ENCODE measurements at regions of chr2 and their contacts with region 1.

Region 1: DNA sequence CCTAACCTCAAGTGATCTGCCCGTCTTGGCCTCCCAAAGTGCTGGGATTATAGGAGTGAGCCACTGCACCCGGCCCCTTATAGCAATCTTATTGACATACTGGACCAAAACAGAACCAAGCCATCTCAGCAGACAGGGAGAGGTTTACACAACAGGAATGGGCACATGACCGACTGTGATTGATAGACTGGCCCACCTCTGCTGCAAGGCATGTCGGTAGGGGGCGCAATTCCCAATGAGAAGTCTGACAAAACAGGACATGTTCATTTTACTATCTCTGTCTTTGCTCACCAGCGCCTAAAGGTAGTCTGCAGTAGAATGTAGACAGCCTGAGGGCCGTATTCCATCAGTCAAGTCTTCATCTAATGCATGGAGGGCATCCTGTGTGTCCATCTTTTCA is 2.0 kb downstream of the LYPD6B start:
- DNase-seq: peak in 1 of 2 experiments; percentile 57
- H3K4me3 ChIP-seq: no peak overlapping the region
- H3K4me3 Mint-ChIP-seq: peak overlapping the region; percentile 86
- H3K27ac Mint-ChIP-seq: no peak overlapping the region
- H3K4me1 ChIP-seq: 0 out of 2 replicates have a peak, but pooled peaks cover 5% of the 10 kb centered on the region
- H3K4me1 Mint-ChIP-seq: peaks cover 16% of the 10 kb centered on the region
- H3K27me3 ChIP-seq: no peaks in the 10 kb centered on the region
- H3K27me3 Mint-ChIP-seq: no peaks in the 10 kb centered on the region
- CTCF ChIP-seq: peak; percentile 4 to 34

Region 2: DNA sequence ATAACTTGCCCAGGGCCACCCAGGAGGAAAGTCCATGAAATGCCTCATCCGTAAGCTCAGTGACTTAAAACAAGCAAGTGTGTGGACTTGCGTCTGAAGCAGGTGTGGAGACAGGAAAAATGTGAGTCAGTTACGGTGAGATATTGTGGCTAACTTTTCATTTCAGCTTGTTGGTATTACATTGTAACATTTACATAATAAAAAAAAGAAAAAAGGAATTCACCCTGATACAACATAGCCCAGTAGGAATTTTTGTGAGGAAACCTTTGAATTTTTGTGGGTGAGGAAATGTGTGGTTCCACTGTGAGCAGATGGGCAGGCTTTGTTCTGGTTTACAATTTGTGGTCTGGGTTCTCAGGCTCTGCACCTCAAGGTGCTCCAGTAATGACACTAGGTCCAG is 35.6 kb before region 1 on chr2:
- CTCF ChIA-PET with region 1: no interaction called
- POLR2A ChIA-PET with region 1: no interaction called
- intact Hi-C with region 1: no loop called
- DNase-seq: no peak
- H3K4me3 ChIP-seq: no peak overlapping the region
- H3K4me3 Mint-ChIP-seq: no peak overlapping the region
- H3K27ac Mint-ChIP-seq: no peak overlapping the region
- H3K4me1 ChIP-seq: peaks cover 5% of the 10 kb centered on the region; the same call in 1 of the 2 replicates
- H3K4me1 Mint-ChIP-seq: no peaks in the 10 kb centered on the region
- H3K27me3 ChIP-seq: no peaks in the 10 kb centered on the region
- H3K27me3 Mint-ChIP-seq: no peaks in the 10 kb centered on the region
- CTCF ChIP-seq: no peak

Region 3: GRCh38 chr2:149027590-149028218 is 12.7 kb before region 1 on chr2:
- CTCF ChIA-PET with region 1: interaction called, 5 read pairs
- POLR2A ChIA-PET with region 1: interaction called, 3 read pairs
- intact Hi-C with region 1: loop called (anchors 1 kb)
- DNase-seq: peak in 1 of 2 experiments; percentile 39
- H3K4me3 ChIP-seq: no peak overlapping the region
- H3K4me3 Mint-ChIP-seq: peak overlapping the region; percentile 41
- H3K27ac Mint-ChIP-seq: peak overlapping the region; percentile 65
- H3K4me1 ChIP-seq: peaks cover 43% of the 10 kb centered on the region
- H3K4me1 Mint-ChIP-seq: peaks cover 49% of the 10 kb centered on the region
- H3K27me3 ChIP-seq: no peaks in the 10 kb centered on the region
- H3K27me3 Mint-ChIP-seq: no peaks in the 10 kb centered on the region
- CTCF ChIP-seq: no peak

Region 4: DNA sequence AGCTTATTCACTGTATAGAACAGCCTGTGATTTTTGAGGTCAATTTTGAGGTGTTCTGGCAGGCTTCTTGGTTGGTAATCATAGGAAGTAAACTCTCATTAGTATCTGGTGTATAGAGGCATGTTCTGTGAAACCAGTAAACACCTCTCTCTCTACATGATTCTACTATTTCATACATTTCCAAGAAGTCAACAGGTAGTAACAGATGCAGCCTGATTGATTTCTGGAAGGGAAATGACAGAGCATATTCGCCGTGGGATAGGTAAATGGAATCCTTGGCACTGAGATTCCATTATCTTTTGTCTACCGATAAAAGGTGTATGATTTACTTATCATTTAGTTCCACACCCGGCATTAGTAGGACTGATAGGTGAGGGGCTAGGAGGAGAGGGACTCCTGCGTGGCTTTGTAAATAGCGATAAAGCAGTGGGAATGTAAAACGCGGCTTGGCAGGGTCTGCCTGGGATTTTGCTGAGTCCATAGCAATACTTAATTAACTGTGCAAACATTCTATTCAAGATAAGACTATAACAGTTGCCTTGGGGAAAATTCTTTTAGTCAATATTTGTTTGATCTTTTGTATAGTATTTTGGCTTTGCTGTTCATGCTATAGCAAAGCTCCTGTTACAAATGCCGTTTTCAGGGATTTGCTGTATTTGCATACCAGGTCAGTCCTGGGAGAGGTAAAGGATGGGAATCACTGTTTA is 30.4 kb after region 1 on chr2:
- CTCF ChIA-PET with region 1: no interaction called
- POLR2A ChIA-PET with region 1: no interaction called
- intact Hi-C with region 1: loop called (anchors 1 kb)
- DNase-seq: peak; percentile 75 to 89
- H3K4me3 ChIP-seq: 0 out of 2 replicates have a peak overlapping the region, but pooled peaks have one; percentile 3
- H3K4me3 Mint-ChIP-seq: peak overlapping the region; percentile 63
- H3K27ac Mint-ChIP-seq: peak overlapping the region; percentile 80
- H3K4me1 ChIP-seq: peaks cover 29% of the 10 kb centered on the region
- H3K4me1 Mint-ChIP-seq: peaks cover 53% of the 10 kb centered on the region
- H3K27me3 ChIP-seq: no peaks in the 10 kb centered on the region; the same call in 1 of the 2 replicates
- H3K27me3 Mint-ChIP-seq: no peaks in the 10 kb centered on the region
- CTCF ChIP-seq: no peak

Region 5: GRCh38 chr2:149125002-149125725 is 84.7 kb after region 1 on chr2:
- CTCF ChIA-PET with region 1: no interaction called
- POLR2A ChIA-PET with region 1: no interaction called
- intact Hi-C with region 1: loop called (anchors 1 kb)
- DNase-seq: peak; percentile 88 to 90
- H3K4me3 ChIP-seq: 0 out of 2 replicates have a peak overlapping the region, but pooled peaks have one; percentile 5
- H3K4me3 Mint-ChIP-seq: peak overlapping the region; percentile 54
- H3K27ac Mint-ChIP-seq: peak overlapping the region; percentile 78
- H3K4me1 ChIP-seq: peaks cover 39% of the 10 kb centered on the region
- H3K4me1 Mint-ChIP-seq: peaks cover 39% of the 10 kb centered on the region
- H3K27me3 ChIP-seq: no peaks in the 10 kb centered on the region
- H3K27me3 Mint-ChIP-seq: no peaks in the 10 kb centered on the region
- CTCF ChIP-seq: no peak

Region 6: GRCh38 chr2:149313512-149313972 is 273.1 kb after region 1 on chr2:
- CTCF ChIA-PET with region 1: interaction called, 7 read pairs
- POLR2A ChIA-PET with region 1: no interaction called
- intact Hi-C with region 1: loop called (anchors 1 kb)
- DNase-seq: peak in 1 of 2 experiments; percentile 56
- H3K4me3 ChIP-seq: no peak overlapping the region
- H3K4me3 Mint-ChIP-seq: no peak overlapping the region
- H3K27ac Mint-ChIP-seq: no peak overlapping the region
- H3K4me1 ChIP-seq: 0 out of 2 replicates have a peak, but pooled peaks cover 4% of the 10 kb centered on the region
- H3K4me1 Mint-ChIP-seq: peaks cover 28% of the 10 kb centered on the region
- H3K27me3 ChIP-seq: no peaks in the 10 kb centered on the region
- H3K27me3 Mint-ChIP-seq: no peaks in the 10 kb centered on the region
- CTCF ChIP-seq: peak; percentile 82 to 84

Region 7: GRCh38 chr2:149330126-149331022 is 289.9 kb after region 1 on chr2 and contains the start of gene LYPD6:
- CTCF ChIA-PET with region 1: interaction called, 3 read pairs
- POLR2A ChIA-PET with region 1: no interaction called
- intact Hi-C with region 1: loop called (anchors 5 kb)
- DNase-seq: peak; percentile 75 to 89
- H3K4me3 ChIP-seq: peak within 1 kb of the TSS; percentile 89
- H3K4me3 Mint-ChIP-seq: peak within 1 kb of the TSS; percentile 92
- H3K27ac Mint-ChIP-seq: peak within 1 kb of the TSS; percentile 72
- H3K4me1 ChIP-seq: no peaks in the 10 kb centered on the region; the same call in 1 of the 2 replicates
- H3K4me1 Mint-ChIP-seq: peaks cover 22% of the 10 kb centered on the region
- H3K27me3 ChIP-seq: no peaks in the 10 kb centered on the region
- H3K27me3 Mint-ChIP-seq: no peaks in the 10 kb centered on the region
- CTCF ChIP-seq: no peak
- total RNA-seq, gene LYPD6: 9.0 and 10.5 TPM in 2 replicates

Region 8: DNA sequence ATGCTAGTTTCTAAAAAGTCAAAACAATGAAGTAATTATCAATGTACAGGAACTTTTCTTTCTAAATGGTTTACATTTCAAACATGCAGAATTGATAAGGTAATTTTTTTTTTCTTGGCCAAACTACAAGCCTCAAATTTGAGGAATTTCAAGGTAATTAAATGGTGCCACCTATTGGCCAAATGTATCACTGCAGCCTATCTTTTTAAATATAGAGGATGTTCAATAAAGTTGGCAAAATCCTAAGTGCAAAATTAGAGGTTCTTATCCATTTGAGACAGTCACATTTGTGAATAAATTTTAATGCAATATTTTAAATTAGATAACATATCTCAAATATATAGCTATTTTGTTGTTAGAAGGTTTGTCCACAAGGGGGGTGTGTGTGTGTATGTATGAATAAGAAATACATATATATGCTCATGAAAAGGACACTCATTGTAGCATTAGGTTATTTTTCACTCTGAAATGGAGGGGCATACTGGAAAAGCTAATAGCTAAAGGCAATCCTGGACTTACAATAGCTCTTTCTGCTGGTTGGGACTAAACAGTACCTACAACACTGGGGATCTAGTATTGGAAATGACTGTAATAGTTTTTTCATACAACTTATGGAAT is 521.0 kb after region 1 on chr2:
- CTCF ChIA-PET with region 1: no interaction called
- POLR2A ChIA-PET with region 1: no interaction called
- intact Hi-C with region 1: loop called (anchors 2 kb)
- DNase-seq: peak in 1 of 2 experiments; percentile 55
- H3K4me3 ChIP-seq: no peak overlapping the region
- H3K4me3 Mint-ChIP-seq: no peak overlapping the region
- H3K27ac Mint-ChIP-seq: no peak overlapping the region
- H3K4me1 ChIP-seq: peaks cover 7% of the 10 kb centered on the region; the same call in 1 of the 2 replicates
- H3K4me1 Mint-ChIP-seq: no peaks in the 10 kb centered on the region
- H3K27me3 ChIP-seq: no peaks in the 10 kb centered on the region
- H3K27me3 Mint-ChIP-seq: no peaks in the 10 kb centered on the region
- CTCF ChIP-seq: peak; percentile 62 to 84